Activated T-helper 2 cell treated with anti-CD3 and anti-CD28 coated beads, Interferon-gamma antibody, Interleukin-2, Interleukin-4, amounts not matched to agents 10 μg/mL and 5 μg/mL and 100 μg/mL, durations not matched to agents 14 hours and 24 hours and 36 hours (primary cell): ENCODE measurements at regions of chr13 and their contacts with region 1.

Region 1: GRCh38 chr13:76822698-76823267 is 63.4 kb downstream of the KCTD12 start:
- DNase-seq: no peak
- H3K4me3 Mint-ChIP-seq: no peak overlapping the region
- H3K27ac Mint-ChIP-seq: no peak overlapping the region
- H3K4me1 Mint-ChIP-seq: no peaks in the 10 kb centered on the region
- H3K27me3 Mint-ChIP-seq: peaks cover 4% of the 10 kb centered on the region

Region 2: DNA sequence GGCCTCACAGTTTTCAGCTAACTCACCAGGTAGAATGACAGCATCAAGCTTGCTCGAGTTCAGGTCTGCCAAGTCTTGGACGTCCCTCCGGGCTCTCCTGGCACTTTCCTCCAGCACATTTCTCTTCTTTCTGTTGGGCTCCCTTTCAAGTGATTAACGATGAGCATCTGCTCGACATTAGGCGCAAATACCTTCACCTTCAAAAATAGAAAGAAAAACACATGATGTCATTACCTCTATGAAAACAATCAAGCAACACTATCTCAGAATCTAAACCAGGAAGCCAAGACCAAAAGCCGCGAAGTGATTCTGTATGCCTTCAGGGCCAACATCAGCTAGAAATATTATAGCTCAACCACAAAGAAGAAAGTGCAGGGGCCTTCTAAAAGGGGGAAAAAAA is 153.7 kb after region 1 on chr13:
- intact Hi-C with region 1: loop called (anchors 10 kb)
- DNase-seq: no peak
- H3K4me3 Mint-ChIP-seq: no peak overlapping the region
- H3K27ac Mint-ChIP-seq: no peak overlapping the region
- H3K4me1 Mint-ChIP-seq: peaks cover 12% of the 10 kb centered on the region
- H3K27me3 Mint-ChIP-seq: peaks cover 46% of the 10 kb centered on the region